ENCODE measurements at regions of chr13 and their contacts with region 1.

Region 1: DNA sequence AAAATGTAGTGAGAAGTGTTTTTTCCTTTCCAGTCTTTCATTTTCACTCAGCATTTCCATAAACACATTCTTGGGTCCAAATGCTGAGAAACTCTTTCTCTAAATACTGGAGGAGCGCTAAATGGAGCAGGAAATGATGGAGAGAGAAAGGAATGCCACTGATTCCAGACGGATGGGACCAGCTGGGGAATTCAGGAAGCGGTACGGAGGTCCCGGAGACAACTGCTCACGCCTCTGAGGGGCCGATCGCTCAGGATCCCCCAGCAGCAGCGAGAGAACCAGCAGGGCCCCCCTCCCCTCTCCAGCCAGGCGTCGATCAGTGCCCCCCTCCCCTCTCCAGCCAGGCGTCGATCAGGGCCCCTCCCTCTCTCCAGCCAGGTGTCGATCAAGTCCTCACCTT is 13.2 kb downstream of the RASA3 start:
- DNase-seq: no peak
- H3K4me3 ChIP-seq: peak overlapping the region in 2 of 3 donors; percentile 30 to 59
- H3K27ac ChIP-seq: peak overlapping the region; percentile 64 to 89
- H3K4me1 ChIP-seq: no peaks in the 10 kb centered on the region
- H3K27me3 ChIP-seq: no peaks in the 10 kb centered on the region
- CTCF ChIP-seq: no peak
- POLR2A ChIP-seq: no peak

Region 2: GRCh38 chr13:114132419-114133121 is 13.4 kb after region 1 on chr13 and contains the start of gene RASA3:
- intact Hi-C with region 1: no loop called
- DNase-seq: no peak
- H3K4me3 ChIP-seq: peak within 1 kb of the TSS; percentile 70 to 96 (median 74)
- H3K27ac ChIP-seq: peak within 1 kb of the TSS; percentile 67 to 80
- H3K4me1 ChIP-seq: peaks cover 6 to 8% of the 10 kb centered on the region in 2 donors
- H3K27me3 ChIP-seq: no peaks in the 10 kb centered on the region
- CTCF ChIP-seq: no peak
- POLR2A ChIP-seq: no peak
- total RNA-seq, gene RASA3: 14.2 to 54.9 (median 31.5) TPM

Region 3: GRCh38 chr13:114146629-114147028 is 27.4 kb after region 1 on chr13:
- intact Hi-C with region 1: loop called (anchors 2 kb)
- DNase-seq: no peak
- H3K4me3 ChIP-seq: no peak overlapping the region
- H3K27ac ChIP-seq: no peak overlapping the region
- H3K4me1 ChIP-seq: peaks cover 0 to 6% of the 10 kb centered on the region in 2 donors
- H3K27me3 ChIP-seq: no peaks in the 10 kb centered on the region
- CTCF ChIP-seq: no peak
- POLR2A ChIP-seq: no peak